GM23248 (cell line): ENCODE measurements at regions of chr20 and their contacts with region 1.

Region 1: DNA sequence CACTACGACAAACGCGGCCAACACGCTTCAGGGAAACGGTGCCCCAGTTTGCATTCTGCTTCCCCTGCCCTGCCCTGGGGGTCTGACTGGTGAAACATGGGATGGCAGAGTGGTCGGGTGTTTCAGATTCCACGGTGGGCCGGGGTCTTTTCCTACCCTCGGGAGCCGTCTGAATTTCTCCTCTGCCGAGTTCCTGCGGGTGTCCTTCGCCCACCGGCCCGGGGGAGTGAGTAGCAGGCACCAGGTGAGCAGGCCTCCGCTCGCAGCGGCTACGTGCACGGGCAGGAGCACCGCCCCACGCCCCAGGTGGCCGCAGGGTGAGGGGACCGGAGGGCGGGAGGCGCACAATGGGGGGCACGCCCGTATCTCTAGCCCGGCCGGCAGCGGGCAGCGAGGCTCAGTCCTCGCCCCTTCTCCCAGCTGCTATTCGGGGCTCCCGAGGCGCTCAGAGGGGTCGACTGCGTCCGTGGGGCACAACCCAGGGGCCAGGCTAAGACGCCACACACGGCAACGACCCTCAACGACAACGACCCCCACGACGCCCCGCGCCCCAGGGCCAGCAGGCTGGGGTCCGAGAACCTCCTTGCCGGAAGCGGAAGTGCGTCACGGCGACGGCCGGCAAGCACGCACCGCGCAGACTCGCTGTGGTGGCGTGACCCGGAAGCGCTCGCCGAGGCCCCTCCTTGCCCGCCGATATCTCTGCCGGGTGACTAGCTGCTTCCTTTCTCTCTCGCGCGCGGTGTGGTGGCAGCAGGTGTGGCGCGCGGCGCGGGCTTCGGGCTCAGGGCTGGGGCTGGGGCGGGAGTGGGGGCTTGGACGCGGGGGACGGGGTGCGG is at the start of gene RPS21:
- DNase-seq: peak; percentile 97
- H3K4me3 ChIP-seq: peak within 1 kb of the TSS; percentile 99
- H3K27ac ChIP-seq: peak within 1 kb of the TSS; percentile 53
- H3K4me1 ChIP-seq: peaks cover 17% of the 10 kb centered on the region
- H3K27me3 ChIP-seq: no peaks in the 10 kb centered on the region
- total RNA-seq, gene RPS21: 1,039 and 1,622 TPM in 2 replicates

Region 2: DNA sequence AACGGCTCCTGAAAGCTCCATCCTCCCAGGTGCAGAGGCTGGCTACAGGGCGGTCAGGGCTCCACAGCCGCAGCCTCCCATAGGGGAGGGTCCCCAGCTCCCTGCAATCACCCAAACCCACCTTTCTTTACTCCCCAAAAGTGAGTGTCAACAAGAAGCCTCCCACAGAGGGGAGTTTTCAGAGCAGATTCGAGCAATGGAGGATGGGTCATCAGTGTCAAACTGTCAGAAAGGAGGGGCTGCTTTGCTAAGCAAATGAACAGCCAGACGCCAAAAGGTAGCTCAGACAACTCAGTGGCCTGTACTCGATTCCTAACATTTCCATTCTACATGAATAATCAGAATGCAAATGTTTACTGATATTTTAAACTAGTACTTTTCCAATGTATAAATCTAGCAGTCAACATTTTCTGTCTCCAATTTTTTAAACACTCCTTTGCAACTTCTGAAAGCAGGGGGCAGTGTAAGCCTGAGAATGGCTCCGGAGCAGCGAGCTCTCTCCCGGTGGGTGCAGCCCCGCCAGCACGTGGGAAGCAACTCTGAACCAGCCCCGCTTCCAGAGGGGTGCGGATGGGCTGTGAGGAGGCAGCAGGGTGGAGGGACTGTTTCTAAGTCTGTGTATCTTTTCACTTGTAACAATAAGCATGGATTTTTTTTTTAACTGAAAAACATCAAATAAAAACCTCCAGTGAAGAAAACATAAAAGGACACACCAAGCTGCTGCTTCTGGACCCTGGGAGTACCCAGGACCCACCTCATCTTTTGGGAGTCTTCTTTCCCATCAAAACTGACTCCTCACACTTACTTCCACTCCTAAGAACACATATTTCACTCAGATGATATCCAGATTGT is 375.8 kb before region 1 on chr20:
- in situ Hi-C with region 1: loop called (anchors 25 kb)
- DNase-seq: peak; percentile 76
- H3K4me3 ChIP-seq: no peak overlapping the region
- H3K27ac ChIP-seq: no peak overlapping the region
- H3K4me1 ChIP-seq: no peaks in the 10 kb centered on the region
- H3K27me3 ChIP-seq: no peaks in the 10 kb centered on the region